Head of caudate nucleus (tissue), 42 donors: ENCODE measurements at regions of chr3 and their contacts with region 1.

Region 1: DNA sequence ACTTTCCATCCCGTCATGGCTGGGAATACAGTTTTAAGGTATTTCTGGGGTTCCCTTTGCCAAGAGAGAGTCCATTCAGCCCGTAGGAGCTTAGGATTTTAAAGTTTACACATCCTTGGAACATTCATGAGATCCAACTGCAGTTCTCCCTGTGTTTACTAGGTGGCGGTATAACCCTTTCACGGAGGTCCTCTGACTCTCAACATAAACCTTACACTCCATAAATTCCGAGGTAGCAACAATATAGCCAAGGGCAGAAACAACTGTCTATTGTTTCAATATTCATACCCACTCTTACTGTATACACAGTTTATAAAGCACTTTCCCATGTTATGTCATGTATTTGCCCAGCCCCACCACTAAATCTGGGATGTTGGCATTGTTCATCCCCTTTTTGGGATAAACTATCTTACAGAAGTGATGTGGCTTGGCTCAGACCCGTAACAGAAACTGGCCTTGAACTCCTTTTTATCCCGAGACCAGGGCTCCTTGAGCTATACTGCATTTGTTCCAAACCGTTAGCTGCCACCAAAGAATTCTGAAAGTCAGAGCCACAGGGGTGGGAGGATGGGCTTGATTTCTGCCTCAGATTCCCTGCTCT is 69.2 kb upstream of the COL6A5 start:
- DNase-seq: peak in 19 of 42 donors; percentile 13 to 65 (median 38)

Region 2: GRCh38 chr3:130236417-130236816 is 39.9 kb before region 1 on chr3:
- intact Hi-C with region 1: no loop called
- DNase-seq: no peak

Region 3: GRCh38 chr3:130539005-130539404 is 262.7 kb after region 1 on chr3:
- intact Hi-C with region 1: loop called (anchors 10 kb)
- DNase-seq: peak in 38 of 42 donors; percentile 19 to 72 (median 39)